Posterior vena cava (tissue), 2 donors: ENCODE measurements at regions of chr7 and their contacts with region 1.

Region 1: DNA sequence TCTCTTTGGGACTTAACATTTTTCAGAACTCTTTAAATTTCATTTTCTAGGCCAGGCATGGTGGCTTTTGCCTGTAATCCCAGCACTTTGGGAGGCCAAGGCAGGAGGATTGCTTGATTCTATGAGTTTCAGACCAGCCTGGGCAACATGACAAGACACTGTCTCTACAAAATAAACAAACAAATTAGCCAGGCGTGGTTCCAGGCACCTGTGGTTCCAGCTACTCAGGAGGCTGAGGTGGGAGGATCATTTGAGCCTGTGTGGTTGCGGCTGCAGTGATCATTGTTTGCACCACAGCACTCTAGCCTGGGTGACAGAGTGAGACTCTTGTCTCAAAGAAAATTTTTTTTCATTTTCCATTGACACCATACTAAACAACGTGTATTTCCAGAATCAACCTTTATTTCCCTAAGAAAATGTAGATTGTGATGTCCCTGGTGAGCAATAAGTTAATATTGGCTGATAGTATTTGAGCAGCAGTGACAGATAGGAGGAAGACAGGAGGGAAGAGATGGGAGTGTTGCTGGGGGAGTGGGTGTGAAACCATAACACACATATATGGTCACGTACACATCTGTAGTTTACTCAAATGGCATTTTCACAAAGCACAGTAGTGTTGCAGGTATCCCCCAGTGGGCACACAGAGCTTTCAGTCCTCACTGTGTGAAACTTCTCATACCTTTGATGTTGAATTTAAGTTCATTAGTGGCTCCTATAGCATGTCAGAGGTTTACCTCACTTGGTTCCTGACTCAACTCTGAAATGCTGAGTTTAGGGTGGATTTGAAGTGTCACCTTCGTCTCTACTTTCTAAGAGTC is 205.6 kb downstream of the AUTS2 start:
- DNase-seq: no peak

Region 2: DNA sequence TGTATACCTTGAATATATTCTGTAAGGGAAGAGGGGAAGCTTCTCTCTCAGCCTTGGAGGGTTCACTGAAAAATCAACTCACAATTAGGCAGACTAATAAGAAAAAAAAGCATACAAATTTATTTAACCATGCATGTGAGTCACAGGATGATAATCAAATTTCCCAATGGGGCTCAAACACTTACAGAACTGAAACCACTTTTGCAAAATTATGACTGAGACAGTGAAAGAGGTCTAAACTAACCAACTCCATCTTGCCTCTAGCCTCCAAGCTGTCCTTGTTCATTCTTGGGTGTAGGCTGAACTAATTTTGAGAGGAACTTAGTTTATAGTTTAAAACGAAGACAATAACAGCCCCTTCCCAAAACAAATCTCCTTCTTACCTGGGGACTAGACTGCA is 823.9 kb before region 1 on chr7:
- intact Hi-C with region 1: no loop called
- DNase-seq: no peak

Region 3: GRCh38 chr7:70752794-70753241 is 948.9 kb after region 1 on chr7:
- intact Hi-C with region 1: loop called in 1 of 2 experiments (anchors 10 kb)
- DNase-seq: no peak